Activated CD4-positive, alpha-beta T cell treated with anti-CD3 and anti-CD28 coated beads, Interleukin-2, amount 10 ng/mL, durations not matched to agents 7 days and 5 days (primary cell): ENCODE measurements at regions of chr14 and their contacts with region 1.

Region 1: DNA sequence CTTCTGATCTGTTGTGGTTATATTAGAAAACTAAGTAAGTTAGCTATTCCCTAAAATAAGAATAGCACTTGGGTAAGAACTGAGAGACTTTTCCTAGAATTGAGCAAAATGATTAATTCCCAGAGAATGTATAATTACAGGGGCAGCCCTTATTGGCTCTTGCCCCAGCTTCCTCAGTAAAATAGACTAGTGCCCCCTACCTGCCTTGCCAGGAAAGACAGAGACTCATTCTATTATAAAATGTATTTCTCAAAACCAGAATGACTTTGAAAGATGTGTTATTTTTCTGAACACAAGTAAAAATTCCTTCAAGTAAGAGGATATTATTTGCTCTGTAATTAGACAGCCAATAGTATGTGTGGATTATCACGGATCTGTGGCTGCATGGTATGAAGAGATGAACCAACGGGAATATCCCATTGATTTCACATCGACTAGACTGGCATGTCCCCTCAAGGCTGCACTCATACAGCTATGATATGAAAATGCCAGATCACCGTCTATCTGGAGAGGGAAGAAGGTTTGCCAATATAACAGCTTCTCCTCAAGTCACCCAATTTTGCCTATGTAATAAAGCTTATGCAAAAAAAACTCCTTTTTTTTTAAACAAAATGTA is 7.4 kb upstream of the GLRX5 start:
- DNase-seq: peak; percentile 64
- H3K4me3 Mint-ChIP-seq: no peak overlapping the region
- H3K27ac Mint-ChIP-seq: peak overlapping the region; percentile 78
- H3K4me1 Mint-ChIP-seq: peaks cover 80% of the 10 kb centered on the region
- H3K27me3 Mint-ChIP-seq: no peaks in the 10 kb centered on the region

Region 2: DNA sequence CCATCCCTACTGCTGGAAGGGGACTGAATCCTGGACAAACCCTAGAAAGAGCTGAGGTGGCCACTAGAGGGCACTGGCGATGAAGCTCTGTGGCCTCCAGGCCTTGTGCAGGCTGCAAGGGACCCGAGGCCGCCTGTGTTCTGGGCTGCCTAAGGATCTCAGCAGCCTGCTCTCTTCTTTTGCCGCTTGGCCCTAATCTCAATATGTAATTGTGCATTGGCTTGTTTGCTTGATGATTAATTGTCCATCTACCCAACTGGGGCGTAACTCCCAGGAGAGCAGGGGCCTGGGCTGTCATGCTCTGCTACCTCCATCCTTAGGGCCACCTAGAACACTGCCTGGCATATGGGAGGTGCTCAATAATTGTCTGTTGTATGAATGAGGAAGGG is 84.9 kb before region 1 on chr14:
- CTCF ChIA-PET with region 1: interaction called, 13 read pairs
- POLR2A ChIA-PET with region 1: no interaction called
- DNase-seq: peak; percentile 76
- H3K4me3 Mint-ChIP-seq: no peak overlapping the region
- H3K27ac Mint-ChIP-seq: peak overlapping the region; percentile 58
- H3K4me1 Mint-ChIP-seq: peaks cover 9% of the 10 kb centered on the region
- H3K27me3 Mint-ChIP-seq: no peaks in the 10 kb centered on the region